ENCODE measurements at regions of chr2 and their contacts with region 1.

Region 1: GRCh38 chr2:84881581-84882414 is 914 bp upstream of the TRABD2A start:
- DNase-seq: no peak
- ATAC-seq: peak; percentile 71
- H3K4me3 ChIP-seq: peak overlapping the region; percentile 67
- H3K27ac ChIP-seq: no peak overlapping the region
- H3K4me1 ChIP-seq: peaks cover 16% of the 10 kb centered on the region
- H3K27me3 ChIP-seq: peaks cover 0 to 9% of the 10 kb centered on the region in 2 experiments; a peak in 3 of 4 replicates
- CTCF ChIP-seq: peak; percentile 59 to 76 (median 74)
- EP300 ChIP-seq: no peak
- POLR2A ChIP-seq: no peak
- RAD21 ChIP-seq: peak; percentile 66

Region 2: DNA sequence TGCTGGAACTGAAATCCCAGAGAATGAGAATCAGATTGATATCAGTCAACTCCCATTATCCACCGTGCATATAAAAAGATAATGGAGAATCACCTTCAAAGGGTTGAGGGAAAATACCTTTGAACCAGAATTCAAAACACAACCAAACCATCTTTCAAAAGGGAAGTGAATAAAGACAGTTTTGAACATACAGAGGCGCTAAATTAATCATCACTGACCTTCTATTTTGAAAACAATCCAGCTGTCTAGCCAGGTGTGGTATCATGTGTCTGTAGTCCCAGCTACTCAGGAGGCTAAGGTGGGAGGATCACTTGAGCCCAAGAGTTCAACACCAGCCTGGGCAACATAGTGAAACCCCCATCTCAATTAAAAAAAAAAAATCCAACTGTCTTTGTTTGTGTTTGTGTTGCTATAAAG is 64.6 kb before region 1 on chr2:
- CTCF ChIA-PET with region 1: no interaction called
- POLR2A ChIA-PET with region 1: no interaction called
- RAD21 ChIA-PET with region 1: no interaction called
- SMC1A ChIA-PET with region 1: interaction called, 3 read pairs
- in situ Hi-C with region 1: no loop called
- intact Hi-C with region 1: loop called (anchors 5 kb)
- DNase-seq: peak; percentile 79
- ATAC-seq: peak; percentile 95
- H3K4me3 ChIP-seq: peak overlapping the region; percentile 19; the same call in 1 of the 2 replicates
- H3K27ac ChIP-seq: no peak overlapping the region
- H3K4me1 ChIP-seq: peaks cover 14% of the 10 kb centered on the region
- H3K27me3 ChIP-seq: peaks cover 3 to 5% of the 10 kb centered on the region in 2 experiments; a peak in 1 of 4 replicates
- CTCF ChIP-seq: no peak
- EP300 ChIP-seq: peak; percentile 93 to 97
- POLR2A ChIP-seq: no peak
- RAD21 ChIP-seq: no peak

Region 3: GRCh38 chr2:84894758-84895520 is 13.1 kb after region 1 on chr2:
- CTCF ChIA-PET with region 1: interaction called, 18 read pairs
- POLR2A ChIA-PET with region 1: interaction called, 7 read pairs
- RAD21 ChIA-PET with region 1: interaction called, 44 read pairs
- SMC1A ChIA-PET with region 1: interaction called, 8 read pairs
- in situ Hi-C with region 1: no loop called
- intact Hi-C with region 1: no loop called
- DNase-seq: no peak
- ATAC-seq: peak; percentile 17
- H3K4me3 ChIP-seq: no peak overlapping the region
- H3K27ac ChIP-seq: peak overlapping the region; percentile 4; the same call in 1 of the 2 replicates
- H3K4me1 ChIP-seq: peaks cover 34% of the 10 kb centered on the region
- H3K27me3 ChIP-seq: no peaks in the 10 kb centered on the region
- CTCF ChIP-seq: no peak
- EP300 ChIP-seq: no peak
- POLR2A ChIP-seq: no peak
- RAD21 ChIP-seq: no peak

Region 4: DNA sequence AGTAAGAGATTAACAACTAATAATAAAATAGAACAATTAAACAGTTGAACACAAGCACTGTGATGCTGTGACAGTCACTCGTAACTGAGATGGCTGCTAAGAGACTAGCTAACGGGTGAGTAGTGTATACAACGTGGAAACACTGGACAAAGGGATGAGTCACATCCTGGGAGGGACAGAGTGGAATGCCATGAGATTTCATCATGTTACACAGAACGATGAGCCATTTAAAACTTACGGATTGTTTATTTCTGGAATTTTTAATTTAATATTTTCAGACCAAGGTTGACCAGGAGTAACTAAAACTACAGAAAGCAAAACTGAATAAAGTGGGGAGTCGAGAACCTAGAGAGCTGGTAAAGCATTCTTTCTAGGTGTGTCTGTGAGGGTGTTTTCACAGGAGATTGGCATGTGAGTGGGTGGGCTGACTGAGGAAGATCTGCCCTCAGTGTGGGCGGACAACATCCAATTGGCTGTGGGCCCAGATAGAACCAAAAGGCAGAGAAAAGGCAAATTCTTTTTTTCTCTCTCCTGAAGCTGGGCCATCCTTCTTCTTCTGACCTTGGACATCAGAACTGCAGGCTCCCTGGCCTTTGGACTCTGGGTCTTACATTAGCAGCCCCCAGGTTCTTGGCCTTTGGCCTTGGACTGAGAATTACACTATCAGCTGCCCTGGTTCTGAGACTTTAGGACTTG is 38.2 kb after region 1 on chr2:
- CTCF ChIA-PET with region 1: interaction called, 133 read pairs
- POLR2A ChIA-PET with region 1: interaction called, 11 read pairs
- RAD21 ChIA-PET with region 1: interaction called, 74 read pairs
- SMC1A ChIA-PET with region 1: interaction called, 83 read pairs
- in situ Hi-C with region 1: no loop called
- intact Hi-C with region 1: loop called (anchors 1 kb)
- DNase-seq: no peak
- ATAC-seq: peak; percentile 64
- H3K4me3 ChIP-seq: peak overlapping the region; percentile 4
- H3K27ac ChIP-seq: peak overlapping the region; percentile 74
- H3K4me1 ChIP-seq: peaks cover 30% of the 10 kb centered on the region
- H3K27me3 ChIP-seq: no peaks in the 10 kb centered on the region
- CTCF ChIP-seq: no peak
- EP300 ChIP-seq: no peak
- POLR2A ChIP-seq: no peak
- RAD21 ChIP-seq: no peak

Region 5: GRCh38 chr2:85011747-85012146 is 129.9 kb after region 1 on chr2:
- CTCF ChIA-PET with region 1: no interaction called
- POLR2A ChIA-PET with region 1: no interaction called
- RAD21 ChIA-PET with region 1: no interaction called
- SMC1A ChIA-PET with region 1: no interaction called
- in situ Hi-C with region 1: no loop called
- intact Hi-C with region 1: loop called (anchors 5 kb)
- DNase-seq: no peak
- ATAC-seq: peak; percentile 29; the same call in 2 of the 3 replicates
- H3K4me3 ChIP-seq: no peak overlapping the region
- H3K27ac ChIP-seq: no peak overlapping the region
- H3K4me1 ChIP-seq: peaks cover 32% of the 10 kb centered on the region
- H3K27me3 ChIP-seq: no peaks in the 10 kb centered on the region
- CTCF ChIP-seq: peak in 1 of 3 experiments; percentile 9; a peak in 2 of 6 replicates
- EP300 ChIP-seq: no peak
- POLR2A ChIP-seq: no peak
- RAD21 ChIP-seq: no peak

Region 6: DNA sequence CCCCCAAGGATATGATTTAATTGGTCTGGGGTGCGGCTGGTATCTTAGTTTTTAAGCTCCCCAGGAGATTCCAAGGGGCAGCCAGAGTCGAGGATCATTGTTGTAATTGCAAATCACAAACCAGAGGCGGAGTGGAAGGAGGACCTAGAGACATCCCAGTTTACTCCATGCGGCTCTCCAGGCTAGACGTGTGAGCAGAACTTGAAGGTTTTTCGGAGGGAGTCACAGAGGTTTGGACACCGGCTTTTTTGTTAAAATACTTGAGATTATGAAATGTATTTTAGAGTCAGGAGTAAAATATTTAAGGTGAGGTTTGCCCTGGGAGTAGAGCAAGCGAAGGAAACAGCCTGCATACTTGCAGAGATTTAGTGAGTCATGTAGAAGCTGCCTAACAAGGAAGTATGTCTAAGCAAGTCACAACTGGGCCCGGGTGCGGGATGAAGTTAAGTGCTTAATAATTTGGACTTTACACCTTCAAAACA is 406.5 kb after region 1 on chr2:
- CTCF ChIA-PET with region 1: no interaction called
- POLR2A ChIA-PET with region 1: no interaction called
- RAD21 ChIA-PET with region 1: no interaction called
- SMC1A ChIA-PET with region 1: no interaction called
- in situ Hi-C with region 1: loop called (anchors 10 kb)
- intact Hi-C with region 1: no loop called
- DNase-seq: no peak
- ATAC-seq: no peak
- H3K4me3 ChIP-seq: no peak overlapping the region
- H3K27ac ChIP-seq: no peak overlapping the region
- H3K4me1 ChIP-seq: no peaks in the 10 kb centered on the region; the same call in 1 of the 2 replicates
- H3K27me3 ChIP-seq: no peaks in the 10 kb centered on the region; a peak in 1 of 4 replicates
- CTCF ChIP-seq: no peak
- EP300 ChIP-seq: no peak
- POLR2A ChIP-seq: no peak
- RAD21 ChIP-seq: no peak

Measured in GM12878 (cell line).